ENCODE measurements at regions of chr5 and their contacts with region 1.

Region 1: DNA sequence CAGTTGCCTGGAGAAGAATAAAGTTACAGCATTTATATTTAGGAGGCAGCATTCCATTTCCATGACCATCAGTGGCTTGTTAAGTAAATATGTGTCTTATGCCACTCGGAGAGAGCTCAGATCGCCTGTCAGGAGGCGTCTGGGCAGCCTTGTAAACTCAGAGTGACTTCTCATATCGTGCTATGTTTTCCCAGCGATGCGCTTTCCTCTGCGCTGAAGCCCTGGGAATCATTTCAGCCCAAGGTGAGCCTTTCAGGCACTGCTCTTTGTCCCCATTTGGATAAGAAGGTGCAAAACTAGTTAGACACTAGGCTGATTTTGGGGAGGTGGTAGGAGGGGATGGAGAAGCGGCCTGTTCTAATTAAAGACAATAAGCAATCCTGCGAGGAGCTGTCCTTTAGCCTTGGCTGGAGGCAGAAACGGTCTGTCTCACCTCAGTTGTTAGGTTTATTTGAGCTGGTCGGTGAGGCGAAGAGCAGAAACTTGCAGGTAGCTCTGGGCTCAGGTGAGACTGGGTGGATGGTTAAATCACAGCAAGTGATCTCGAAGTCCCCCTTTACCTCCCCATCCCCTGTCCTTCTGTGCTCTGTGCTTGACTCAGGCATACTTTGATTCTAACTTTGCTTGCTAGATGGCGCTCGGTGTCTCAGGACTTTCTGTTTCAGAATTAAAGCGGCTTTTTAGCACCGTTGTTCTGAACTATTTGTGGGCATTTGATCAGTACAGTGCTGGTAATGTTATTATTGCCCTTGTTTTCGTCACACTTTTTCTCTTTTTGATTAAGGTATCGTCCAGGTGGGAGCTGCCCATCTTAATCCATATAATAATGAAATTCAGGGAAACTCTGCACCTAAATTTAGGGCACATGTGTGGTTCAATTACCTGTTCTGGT is 24.6 kb downstream of the NR2F1 start:
- DNase-seq: no peak
- H3K4me3 ChIP-seq: peak overlapping the region; percentile 23
- CTCF ChIP-seq: peak; percentile 51

Region 2: DNA sequence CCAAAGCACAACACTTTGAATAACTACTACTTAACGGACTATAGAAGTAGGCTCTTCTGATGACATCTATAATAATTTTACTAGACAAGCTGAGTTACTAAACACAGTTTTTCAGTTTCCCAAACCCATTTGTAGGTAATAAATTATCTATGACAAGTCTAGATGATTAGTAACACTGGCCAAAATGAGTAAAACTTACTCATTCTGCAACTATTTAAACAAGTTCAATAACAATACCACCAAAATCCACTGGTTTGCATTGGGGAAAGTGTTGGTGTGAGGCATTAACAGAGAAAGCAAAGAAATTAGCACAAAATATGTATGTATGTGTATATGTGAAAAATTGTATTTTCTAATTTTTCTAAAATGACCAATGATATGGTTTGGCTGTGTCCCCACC is 145.9 kb before region 1 on chr5:
- CTCF ChIA-PET with region 1: no interaction called
- POLR2A ChIA-PET with region 1: no interaction called
- DNase-seq: no peak
- H3K4me3 ChIP-seq: no peak overlapping the region
- CTCF ChIP-seq: no peak

Region 3: GRCh38 chr5:93589829-93590215 is 17.8 kb before region 1 on chr5:
- CTCF ChIA-PET with region 1: interaction called, 13 read pairs
- POLR2A ChIA-PET with region 1: no interaction called
- DNase-seq: no peak
- H3K4me3 ChIP-seq: no peak overlapping the region
- CTCF ChIP-seq: no peak

Region 4: DNA sequence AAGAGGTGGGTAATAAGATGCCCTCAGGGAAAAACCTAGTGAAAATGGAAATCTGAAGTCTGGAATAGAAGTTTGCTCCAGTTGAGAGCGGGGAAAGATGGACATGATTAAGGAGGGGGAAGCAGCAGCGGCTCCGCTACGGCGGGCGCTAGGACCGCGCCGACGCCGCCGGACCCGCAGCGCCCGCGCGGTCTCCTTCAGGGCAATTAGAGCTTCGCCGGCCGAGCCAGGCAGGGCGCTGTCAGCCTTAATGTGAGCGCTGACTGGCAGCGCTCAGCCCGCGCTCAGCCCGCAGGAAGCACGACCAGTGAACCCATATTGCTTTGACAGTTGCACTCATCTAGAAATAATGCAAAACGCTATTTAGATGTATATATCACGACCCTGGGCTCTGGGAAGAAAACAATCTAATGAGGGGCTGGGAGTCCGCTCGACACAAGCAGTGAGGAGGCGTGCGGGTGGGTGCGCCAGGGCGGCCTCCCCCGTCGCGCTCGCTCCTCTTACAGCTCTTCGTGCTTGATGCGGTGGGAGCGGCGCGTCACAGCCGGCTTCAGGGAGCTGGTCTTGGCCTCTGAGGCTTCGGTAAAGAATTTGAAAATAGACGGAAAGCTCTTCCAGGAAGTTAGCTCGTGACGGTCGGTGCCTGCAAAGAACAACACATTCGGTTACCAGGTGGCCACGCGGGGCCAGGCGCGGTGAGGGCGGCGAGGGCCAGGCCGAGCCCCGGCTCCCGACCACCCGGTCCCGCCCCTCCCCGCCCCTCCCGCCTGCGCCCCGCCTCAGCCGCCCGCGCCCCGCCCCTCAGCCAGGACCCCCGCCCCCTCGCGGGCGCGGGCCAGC is 13.1 kb after region 1 on chr5:
- CTCF ChIA-PET with region 1: interaction called, 35 read pairs
- POLR2A ChIA-PET with region 1: interaction called, 4 read pairs
- DNase-seq: no peak
- H3K4me3 ChIP-seq: peak overlapping the region; percentile 68
- CTCF ChIP-seq: peak; percentile 1

Region 5: DNA sequence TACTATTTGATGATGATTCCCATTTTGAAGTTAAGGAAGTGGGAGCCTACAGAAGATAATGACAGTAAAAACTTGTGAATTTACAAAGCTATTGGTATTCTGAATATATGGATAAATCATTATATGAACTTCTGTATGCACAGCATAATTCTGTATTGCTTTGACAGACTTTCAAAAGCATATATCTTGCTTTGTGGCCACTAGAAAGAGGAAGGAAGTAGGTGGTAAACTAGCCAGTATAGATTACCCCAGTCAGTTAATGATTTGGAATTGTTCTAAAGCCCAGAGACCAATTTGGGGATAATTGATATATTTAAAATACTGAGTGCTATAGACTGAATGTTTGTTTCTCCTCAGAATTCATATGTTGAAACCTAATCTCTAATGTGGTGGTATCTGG is 28.4 kb after region 1 on chr5:
- CTCF ChIA-PET with region 1: no interaction called
- POLR2A ChIA-PET with region 1: no interaction called
- DNase-seq: no peak
- H3K4me3 ChIP-seq: no peak overlapping the region
- CTCF ChIP-seq: no peak

Region 6: DNA sequence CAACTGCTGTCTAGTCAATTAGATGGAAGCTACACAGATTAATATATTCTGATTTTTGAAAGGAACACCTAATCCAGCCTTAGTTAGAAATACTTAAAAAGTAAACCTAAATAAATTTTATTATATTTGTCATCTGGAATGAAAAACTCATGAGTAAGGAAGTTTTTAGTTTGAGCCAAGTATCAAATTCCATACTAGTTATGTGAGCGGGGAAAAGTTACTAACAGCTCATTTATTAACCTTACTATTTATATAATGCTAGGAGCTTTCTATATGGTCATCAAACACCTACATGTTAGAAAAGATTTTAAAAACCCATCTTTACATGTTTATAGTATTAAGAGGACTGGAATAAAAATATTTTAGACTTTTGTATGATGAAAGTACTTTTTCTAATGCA is 175.4 kb after region 1 on chr5:
- CTCF ChIA-PET with region 1: interaction called, 25 read pairs
- POLR2A ChIA-PET with region 1: no interaction called
- DNase-seq: no peak
- H3K4me3 ChIP-seq: no peak overlapping the region
- CTCF ChIP-seq: no peak

Region 7: GRCh38 chr5:93789173-93790070 is 181.8 kb after region 1 on chr5:
- CTCF ChIA-PET with region 1: interaction called, 25 read pairs
- POLR2A ChIA-PET with region 1: no interaction called
- DNase-seq: peak; percentile 12
- H3K4me3 ChIP-seq: no peak overlapping the region
- CTCF ChIP-seq: no peak

Region 8: GRCh38 chr5:93794954-93795353 is 187.3 kb after region 1 on chr5:
- CTCF ChIA-PET with region 1: interaction called, 53 read pairs
- POLR2A ChIA-PET with region 1: no interaction called
- DNase-seq: no peak
- H3K4me3 ChIP-seq: no peak overlapping the region
- CTCF ChIP-seq: no peak